ENCODE measurements at regions of chr10 and their contacts with region 1.

Region 1: GRCh38 chr10:44398747-44399658 is 14.1 kb upstream of the CXCL12 start:
- DNase-seq: no peak
- ATAC-seq: no peak
- H3K4me3 ChIP-seq: no peak overlapping the region
- H3K27ac ChIP-seq: no peak overlapping the region
- H3K4me1 ChIP-seq: peaks cover 0 to 7% (median 0%) of the 10 kb centered on the region in 9 donors
- H3K27me3 ChIP-seq: peaks cover 0 to 8% (median 5%) of the 10 kb centered on the region in 7 donors
- CTCF ChIP-seq: no peak

Region 2: DNA sequence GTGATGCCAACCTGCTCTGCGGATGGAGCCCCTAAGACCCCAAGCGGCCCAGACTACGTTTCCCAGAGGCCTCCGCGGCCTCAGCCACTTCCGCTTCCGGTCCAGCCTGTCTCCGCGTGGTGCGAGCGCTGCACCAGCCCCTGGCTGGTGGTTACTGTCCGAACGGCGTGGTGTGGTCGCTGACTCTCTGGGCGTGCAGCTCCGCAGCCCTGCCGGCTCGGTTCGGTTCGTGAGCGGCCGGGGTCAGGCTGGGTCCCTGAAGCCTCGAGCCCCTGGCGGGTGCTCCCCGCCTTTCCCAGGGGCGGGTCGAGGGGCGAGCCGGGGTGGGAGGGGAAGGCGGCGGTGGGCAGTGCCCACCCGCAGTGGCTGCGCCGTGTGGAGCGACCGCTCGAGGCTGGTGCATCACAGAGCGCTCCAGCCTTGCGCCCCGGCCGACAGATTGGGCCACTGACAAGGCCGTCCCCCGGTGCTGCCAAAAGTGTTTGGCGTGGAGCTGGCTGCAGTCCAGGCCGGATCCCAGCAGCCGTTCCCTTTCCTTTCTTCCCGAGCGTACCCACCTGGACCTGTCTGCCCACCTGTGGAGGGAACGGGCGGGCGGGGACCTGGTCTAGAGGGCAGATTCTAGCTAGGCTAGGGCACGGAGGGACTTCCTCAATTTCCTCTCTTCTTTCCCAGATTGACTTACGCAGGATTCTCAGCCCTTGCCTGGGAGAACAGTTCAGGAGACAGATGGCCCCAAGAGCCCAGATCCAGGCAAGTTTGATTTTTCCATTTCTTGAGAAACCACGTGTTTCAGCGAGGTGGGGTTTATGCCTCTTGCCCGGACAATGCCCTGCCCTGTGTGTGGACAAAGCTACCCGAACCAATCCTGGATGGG is 792.4 kb before region 1 on chr10 and contains the start of gene ZNF485:
- intact Hi-C with region 1: no loop called
- DNase-seq: peak; percentile 70 to 80
- ATAC-seq: peak; percentile 94 to 98 (median 96)
- H3K4me3 ChIP-seq: peak within 1 kb of the TSS; percentile 69 to 98 (median 90)
- H3K27ac ChIP-seq: peak within 1 kb of the TSS in 8 of 10 donors; percentile 14 to 81 (median 70)
- H3K4me1 ChIP-seq: peaks cover 0 to 16% (median 8%) of the 10 kb centered on the region in 9 donors
- H3K27me3 ChIP-seq: no peaks in the 10 kb centered on the region
- CTCF ChIP-seq: peak in 2 of 9 donors; percentile 19 to 37
- total RNA-seq, gene ZNF485: 0.81 to 2.3 (median 1.5) TPM

Region 3: DNA sequence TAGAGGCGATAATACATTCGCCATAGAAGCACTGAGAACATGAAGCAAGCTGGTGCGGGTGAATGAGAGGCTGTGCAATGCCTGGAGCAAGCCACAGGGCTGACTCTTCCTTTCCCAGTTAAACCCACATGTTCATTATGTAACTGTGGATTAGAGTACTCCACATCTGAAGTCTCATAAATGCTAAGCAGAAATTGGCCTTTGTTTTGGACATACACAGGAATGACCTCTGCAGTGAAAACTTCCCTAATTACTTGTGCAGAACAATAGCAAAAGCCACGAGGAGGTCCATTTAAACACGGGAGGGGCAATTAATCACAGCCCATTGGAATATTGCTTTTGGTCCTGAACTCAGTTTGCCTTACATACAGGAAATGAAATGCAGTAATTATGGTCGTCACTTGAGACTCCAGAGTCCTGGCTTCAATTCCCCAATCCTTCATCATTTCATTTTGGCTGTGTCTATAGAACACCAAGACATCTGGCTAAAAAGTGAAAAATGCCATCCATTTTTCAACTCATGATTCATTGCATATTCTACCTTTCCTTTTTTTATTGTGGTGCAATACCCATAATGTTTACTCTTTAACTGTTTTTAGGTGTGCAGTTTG is 64.6 kb after region 1 on chr10:
- intact Hi-C with region 1: loop called in 1 of 10 experiments (anchors 10 kb)
- DNase-seq: no peak
- ATAC-seq: peak in 3 of 8 donors; percentile 44 to 69 (median 49)
- H3K4me3 ChIP-seq: no peak overlapping the region
- H3K27ac ChIP-seq: no peak overlapping the region
- H3K4me1 ChIP-seq: peaks cover 0 to 28% (median 13%) of the 10 kb centered on the region in 9 donors
- H3K27me3 ChIP-seq: peaks cover 0 to 18% (median 8%) of the 10 kb centered on the region in 7 donors
- CTCF ChIP-seq: no peak

Region 4: DNA sequence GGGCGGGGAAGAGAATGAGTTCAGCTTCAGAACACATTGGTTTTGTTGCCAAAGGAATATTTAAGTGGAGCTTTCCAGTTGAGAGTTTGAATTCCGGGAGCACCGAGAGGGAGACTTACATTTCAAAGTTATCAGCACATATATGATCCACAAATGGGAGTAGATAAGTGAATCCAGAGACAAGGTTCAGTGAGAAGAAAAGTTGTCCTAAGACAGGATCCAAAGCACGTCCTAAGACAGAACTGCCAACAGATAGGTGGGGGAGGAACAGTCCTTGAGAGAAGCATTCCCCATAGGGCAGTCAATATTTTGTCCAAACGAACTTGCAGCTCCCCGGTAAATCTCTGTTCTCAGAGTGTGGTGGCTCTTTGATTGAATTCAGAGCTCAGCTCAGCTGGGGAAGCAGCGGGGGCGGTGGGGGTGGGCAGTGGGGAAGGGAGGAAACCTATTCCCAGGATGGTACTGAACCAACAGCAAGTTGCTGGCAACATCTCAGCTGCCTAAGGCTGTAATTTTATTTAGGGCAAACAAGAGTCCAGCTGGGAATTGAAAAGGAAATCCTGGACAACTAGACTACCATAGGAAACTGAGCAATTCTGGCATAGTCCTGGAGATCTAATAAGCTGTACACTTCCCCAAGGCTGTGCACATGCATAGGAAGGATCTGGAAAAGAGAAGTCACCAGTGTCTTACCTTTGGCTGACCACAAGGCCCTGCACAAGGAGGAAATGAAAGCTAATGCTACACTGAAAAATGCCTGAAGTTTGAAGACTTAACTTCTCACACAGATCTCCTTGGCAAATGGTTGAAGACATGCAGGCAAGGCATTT is 80.1 kb after region 1 on chr10:
- intact Hi-C with region 1: loop called in 1 of 10 experiments (anchors 2 kb)
- DNase-seq: no peak
- ATAC-seq: peak; percentile 38 to 90 (median 80)
- H3K4me3 ChIP-seq: no peak overlapping the region
- H3K27ac ChIP-seq: peak overlapping the region in 3 of 10 donors; percentile 26 to 34 (median 31)
- H3K4me1 ChIP-seq: peaks cover 0 to 46% (median 22%) of the 10 kb centered on the region in 9 donors
- H3K27me3 ChIP-seq: no peaks in the 10 kb centered on the region
- CTCF ChIP-seq: no peak

Region 5: GRCh38 chr10:44857363-44858016 is 458.5 kb after region 1 on chr10:
- intact Hi-C with region 1: loop called in 1 of 10 experiments (anchors 5 kb)
- DNase-seq: peak; percentile 78 to 79
- ATAC-seq: peak; percentile 73 to 91 (median 86)
- H3K4me3 ChIP-seq: no peak overlapping the region
- H3K27ac ChIP-seq: peak overlapping the region in 1 of 10 donors; percentile 3
- H3K4me1 ChIP-seq: peaks cover 0 to 28% (median 0%) of the 10 kb centered on the region in 9 donors
- H3K27me3 ChIP-seq: peaks cover 0 to 8% (median 0%) of the 10 kb centered on the region in 7 donors
- CTCF ChIP-seq: peak; percentile 95 to 100 (median 98)